Breast epithelium (tissue), 4 donors: ENCODE measurements at regions of chr6 and their contacts with region 1.

Region 1: GRCh38 chr6:133923938-133924593 is 29.0 kb upstream of the TBPL1 start:
- DNase-seq: peak in 1 of 2 donors; percentile 70
- H3K4me3 ChIP-seq: no peak overlapping the region
- H3K27ac ChIP-seq: no peak overlapping the region
- H3K4me1 ChIP-seq: no peaks in the 10 kb centered on the region
- H3K27me3 ChIP-seq: peaks cover 0 to 3% of the 10 kb centered on the region in 2 donors
- CTCF ChIP-seq: peak; percentile 47 to 83 (median 82)
- POLR2A ChIP-seq: no peak

Region 2: GRCh38 chr6:132179955-132180354 is 1744.1 kb before region 1 on chr6:
- intact Hi-C with region 1: no loop called
- DNase-seq: no peak
- H3K4me3 ChIP-seq: no peak overlapping the region
- H3K27ac ChIP-seq: no peak overlapping the region
- H3K4me1 ChIP-seq: no peaks in the 10 kb centered on the region
- H3K27me3 ChIP-seq: no peaks in the 10 kb centered on the region
- CTCF ChIP-seq: no peak
- POLR2A ChIP-seq: no peak

Region 3: DNA sequence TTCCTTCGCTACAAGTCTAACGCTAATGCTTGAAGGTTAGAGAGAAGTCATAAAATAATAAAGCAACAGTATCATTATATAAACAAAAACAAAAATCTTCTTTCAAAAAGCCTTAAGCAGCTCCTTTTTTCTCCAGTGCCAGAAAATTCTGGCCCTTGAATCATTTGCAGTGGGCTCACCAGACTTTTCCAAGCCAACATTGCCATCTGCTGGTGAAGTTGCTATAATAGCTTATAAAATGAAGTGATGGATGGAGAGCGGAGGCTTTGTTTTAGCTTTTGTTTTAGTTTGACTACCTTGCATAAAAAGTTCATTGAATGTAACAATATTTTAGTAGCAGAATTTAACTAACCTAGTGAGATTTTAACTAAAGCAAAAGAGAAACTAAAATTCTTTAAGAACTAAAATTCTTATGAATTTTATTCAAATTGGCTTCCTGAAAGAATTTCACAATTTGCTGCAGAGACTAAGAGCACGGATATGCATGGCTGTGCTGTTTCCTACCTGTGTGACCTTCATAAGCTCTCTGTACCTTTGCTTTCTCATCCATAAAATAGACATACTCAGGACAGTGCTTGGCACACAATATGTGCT is 173.1 kb after region 1 on chr6:
- intact Hi-C with region 1: loop called (anchors 10 kb)
- DNase-seq: no peak
- H3K4me3 ChIP-seq: no peak overlapping the region
- H3K27ac ChIP-seq: no peak overlapping the region
- H3K4me1 ChIP-seq: no peaks in the 10 kb centered on the region
- H3K27me3 ChIP-seq: no peaks in the 10 kb centered on the region
- CTCF ChIP-seq: peak; percentile 43 to 73 (median 65)
- POLR2A ChIP-seq: no peak